ENCODE measurements at regions of chr2 and their contacts with region 1.

Region 1: GRCh38 chr2:26692279-26692896 is at the start of gene KCNK3:
- DNase-seq: peak; percentile 71 to 83 (median 75)
- ATAC-seq: peak; percentile 71 to 87 (median 82)
- H3K4me3 ChIP-seq: peak within 1 kb of the TSS in 11 of 12 donors; percentile 2 to 48 (median 37)
- H3K27ac ChIP-seq: peak within 1 kb of the TSS in 9 of 12 donors; percentile 39 to 85 (median 63)
- H3K4me1 ChIP-seq: peaks cover 0 to 26% (median 17%) of the 10 kb centered on the region in 12 donors
- H3K27me3 ChIP-seq: peaks cover 0 to 64% (median 32%) of the 10 kb centered on the region in 9 donors
- CTCF ChIP-seq: no peak
- POLR2A ChIP-seq: no peak
- total RNA-seq, gene KCNK3: 0.61 to 12.2 (median 2.1) TPM

Region 2: DNA sequence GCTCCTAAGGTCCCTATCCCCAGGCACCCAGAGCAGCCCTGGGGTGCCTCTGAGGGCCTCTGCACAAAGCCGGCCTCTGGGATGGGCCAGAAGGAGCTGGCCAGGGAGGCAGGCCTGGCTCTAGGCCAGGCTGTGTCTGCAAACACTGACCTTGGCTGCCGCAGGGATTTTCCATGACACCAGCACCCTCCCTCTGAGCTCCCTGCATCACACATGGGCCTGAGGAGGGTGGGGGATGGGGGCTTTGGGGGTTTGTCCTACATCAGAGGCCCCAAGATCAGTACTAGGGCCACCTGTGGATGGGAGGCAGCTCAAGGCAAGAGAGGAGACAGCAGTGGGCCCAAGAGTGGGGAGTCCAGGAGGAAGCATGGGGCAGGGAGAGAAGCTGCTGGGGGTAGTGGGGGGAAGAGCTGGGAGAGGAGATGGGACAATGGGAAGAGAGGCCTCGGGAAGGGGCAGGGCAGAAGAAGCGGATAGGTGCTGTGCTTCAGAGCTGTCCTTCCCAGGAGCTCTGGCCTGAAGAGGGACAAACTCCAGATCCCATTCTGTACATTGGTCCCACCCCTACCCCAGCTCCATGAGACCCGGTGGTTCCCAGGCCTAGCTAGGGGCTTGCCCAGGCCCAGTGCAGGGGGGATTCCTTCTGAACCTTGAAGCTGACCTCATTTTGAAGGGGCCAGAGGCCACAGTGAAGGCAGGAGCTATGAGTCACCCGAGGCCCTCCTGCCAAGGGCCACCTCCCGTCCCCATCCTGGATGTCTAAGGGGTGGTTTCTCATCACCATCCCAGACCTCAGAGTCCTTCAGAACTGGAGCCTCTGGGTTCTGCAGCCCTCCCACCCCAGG is 28.2 kb after region 1 on chr2:
- intact Hi-C with region 1: loop called in 2 of 10 experiments (anchors 1 to 5 kb)
- DNase-seq: peak; percentile 90 to 95 (median 91)
- ATAC-seq: peak; percentile 79 to 94 (median 90)
- H3K4me3 ChIP-seq: no peak overlapping the region
- H3K27ac ChIP-seq: peak overlapping the region in 11 of 12 donors; percentile 58 to 91 (median 82)
- H3K4me1 ChIP-seq: peaks cover 4 to 56% (median 41%) of the 10 kb centered on the region in 12 donors
- H3K27me3 ChIP-seq: no peaks in the 10 kb centered on the region
- CTCF ChIP-seq: no peak
- POLR2A ChIP-seq: no peak

Region 3: GRCh38 chr2:26727641-26728561 is 35.5 kb after region 1 on chr2:
- intact Hi-C with region 1: loop called in 1 of 10 experiments (anchors 5 kb)
- DNase-seq: no peak
- ATAC-seq: no peak
- H3K4me3 ChIP-seq: no peak overlapping the region
- H3K27ac ChIP-seq: no peak overlapping the region
- H3K4me1 ChIP-seq: peaks cover 0 to 28% (median 17%) of the 10 kb centered on the region in 12 donors
- H3K27me3 ChIP-seq: peaks cover 0 to 17% (median 3%) of the 10 kb centered on the region in 9 donors
- CTCF ChIP-seq: peak in 9 of 12 donors; percentile 11 to 39 (median 26)
- POLR2A ChIP-seq: no peak

Region 4: DNA sequence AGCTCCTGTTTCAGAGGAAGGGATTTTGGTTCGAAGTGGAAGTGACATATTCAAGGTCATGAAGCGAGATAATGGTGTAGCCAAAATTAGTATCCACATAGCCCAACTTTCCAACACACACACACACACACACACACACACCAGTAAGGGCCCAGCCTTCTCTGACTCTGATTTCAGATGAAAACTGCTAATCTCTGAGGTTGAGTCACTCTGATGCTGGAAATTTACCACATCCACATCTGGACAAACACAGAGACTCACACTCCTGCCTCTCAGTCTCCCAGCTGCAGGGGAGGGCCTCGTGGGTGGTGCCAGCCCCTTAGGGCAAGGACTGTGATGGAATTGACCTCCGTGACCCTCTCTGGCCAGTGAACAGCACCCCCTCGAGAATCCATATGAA is 42.7 kb after region 1 on chr2:
- intact Hi-C with region 1: loop called in 1 of 10 experiments (anchors 5 kb)
- DNase-seq: no peak
- ATAC-seq: peak in 3 of 4 donors; percentile 61 to 78 (median 64)
- H3K4me3 ChIP-seq: no peak overlapping the region
- H3K27ac ChIP-seq: peak overlapping the region in 2 of 12 donors; percentile 32 to 49
- H3K4me1 ChIP-seq: peaks cover 0 to 16% (median 4%) of the 10 kb centered on the region in 12 donors
- H3K27me3 ChIP-seq: no peaks in the 10 kb centered on the region
- CTCF ChIP-seq: no peak
- POLR2A ChIP-seq: no peak

Measured in heart left ventricle (tissue), 16 donors.